Mammary epithelial cell (primary cell): ENCODE measurements at regions of chr10 and their contacts with region 1.

Region 1: DNA sequence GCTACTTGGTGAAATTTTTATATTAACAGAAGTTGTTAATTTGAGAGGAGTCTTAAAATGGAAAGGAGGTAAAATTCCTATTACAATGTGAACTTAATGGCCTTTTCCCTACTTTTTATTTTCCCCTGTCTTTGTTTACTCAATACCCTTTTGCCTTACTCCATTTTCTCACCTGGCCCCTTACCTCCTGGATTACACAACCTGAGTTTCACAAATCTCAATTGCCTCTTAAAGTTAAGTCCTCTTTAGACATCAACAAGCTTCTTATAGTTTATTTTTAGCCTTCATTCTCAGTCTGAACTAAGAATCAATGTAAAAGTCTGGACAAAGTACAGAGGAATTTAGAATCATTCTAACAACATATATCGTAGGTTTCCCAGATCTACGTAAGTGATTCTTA is 247.0 kb downstream of the PCDH15 start:
- DNase-seq: no peak
- H3K4me3 ChIP-seq: no peak overlapping the region
- H3K27ac ChIP-seq: no peak overlapping the region
- H3K4me1 ChIP-seq: no peaks in the 10 kb centered on the region
- H3K27me3 ChIP-seq: no peaks in the 10 kb centered on the region
- CTCF ChIP-seq: no peak

Region 2: GRCh38 chr10:54454271-54454670 is 99.8 kb before region 1 on chr10:
- CTCF ChIA-PET with region 1: no interaction called
- dilution Hi-C with region 1: no loop called
- in situ Hi-C with region 1: no loop called
- intact Hi-C with region 1: no loop called
- DNase-seq: no peak
- H3K4me3 ChIP-seq: no peak overlapping the region
- H3K27ac ChIP-seq: no peak overlapping the region
- H3K4me1 ChIP-seq: no peaks in the 10 kb centered on the region
- H3K27me3 ChIP-seq: no peaks in the 10 kb centered on the region
- CTCF ChIP-seq: no peak

Region 3: DNA sequence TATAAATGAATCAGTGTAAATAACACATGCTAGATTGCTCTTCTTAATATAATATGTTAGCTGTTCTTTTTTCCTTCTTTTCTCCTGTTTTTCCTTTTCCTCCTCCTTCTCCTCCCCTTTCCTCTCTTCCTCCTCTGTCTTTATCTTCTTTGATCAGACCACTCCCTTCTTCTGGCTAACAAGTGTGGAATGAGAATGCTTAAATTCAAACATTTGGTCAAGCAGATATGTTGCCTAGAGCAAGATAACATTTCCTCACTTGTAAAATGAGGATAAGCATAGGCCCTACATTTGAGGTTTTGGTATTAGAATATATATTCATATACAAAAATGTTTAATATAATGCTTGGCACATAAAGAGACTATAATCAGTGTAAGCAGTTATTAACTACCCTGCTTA is 52.1 kb before region 1 on chr10:
- CTCF ChIA-PET with region 1: interaction called, 14 read pairs
- dilution Hi-C with region 1: no loop called
- in situ Hi-C with region 1: no loop called
- intact Hi-C with region 1: no loop called
- DNase-seq: no peak
- H3K4me3 ChIP-seq: no peak overlapping the region
- H3K27ac ChIP-seq: no peak overlapping the region
- H3K4me1 ChIP-seq: no peaks in the 10 kb centered on the region
- H3K27me3 ChIP-seq: no peaks in the 10 kb centered on the region
- CTCF ChIP-seq: no peak

Region 4: GRCh38 chr10:55033061-55033460 is 479.0 kb after region 1 on chr10:
- CTCF ChIA-PET with region 1: no interaction called
- dilution Hi-C with region 1: no loop called
- in situ Hi-C with region 1: no loop called
- intact Hi-C with region 1: no loop called
- DNase-seq: no peak
- H3K4me3 ChIP-seq: no peak overlapping the region
- H3K27ac ChIP-seq: no peak overlapping the region
- H3K4me1 ChIP-seq: no peaks in the 10 kb centered on the region
- H3K27me3 ChIP-seq: no peaks in the 10 kb centered on the region
- CTCF ChIP-seq: no peak